Esophagus muscularis mucosa (tissue), 4 donors: ENCODE measurements at regions of chr17 and their contacts with region 1.

Region 1: DNA sequence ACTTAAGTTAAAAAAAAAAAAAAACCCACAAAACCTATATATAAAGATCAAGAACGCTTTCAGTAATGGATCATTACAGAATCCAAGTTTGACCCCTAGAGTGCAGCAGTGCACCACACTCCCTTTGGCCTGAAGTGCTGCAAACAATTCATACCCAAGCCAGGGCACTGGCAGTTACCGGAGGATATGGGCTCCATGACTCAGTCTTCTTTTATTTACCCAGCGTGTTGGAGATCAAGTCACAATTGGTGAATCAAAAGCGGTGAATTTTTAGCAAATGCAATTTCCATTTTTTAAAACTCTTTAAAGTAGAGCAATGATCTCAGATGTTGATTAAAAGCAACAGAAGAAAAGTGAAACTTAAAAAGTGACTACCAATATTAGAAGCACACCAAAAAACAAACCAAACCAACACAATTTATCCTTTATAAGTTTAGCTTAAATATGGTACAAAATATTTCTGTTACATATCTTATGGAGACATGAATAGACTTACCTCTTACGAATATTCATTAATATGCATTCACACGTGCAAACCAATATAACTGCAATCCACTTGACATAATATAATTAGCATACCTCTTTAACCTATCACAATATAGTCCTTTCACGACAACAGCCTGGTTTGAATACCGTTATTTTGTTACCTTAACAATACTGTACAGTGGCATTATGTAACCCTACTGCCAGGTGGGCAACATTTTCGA is 46.3 kb downstream of the ZNF652 start:
- DNase-seq: no peak
- H3K4me3 ChIP-seq: no peak overlapping the region
- H3K27ac ChIP-seq: peak overlapping the region in 1 of 4 donors; percentile 30
- H3K4me1 ChIP-seq: peaks cover 5 to 35% (median 25%) of the 10 kb centered on the region in 4 donors
- H3K27me3 ChIP-seq: no peaks in the 10 kb centered on the region
- CTCF ChIP-seq: peak; percentile 79 to 84 (median 83)
- EP300 ChIP-seq: no peak
- POLR2A ChIP-seq: no peak

Region 2: DNA sequence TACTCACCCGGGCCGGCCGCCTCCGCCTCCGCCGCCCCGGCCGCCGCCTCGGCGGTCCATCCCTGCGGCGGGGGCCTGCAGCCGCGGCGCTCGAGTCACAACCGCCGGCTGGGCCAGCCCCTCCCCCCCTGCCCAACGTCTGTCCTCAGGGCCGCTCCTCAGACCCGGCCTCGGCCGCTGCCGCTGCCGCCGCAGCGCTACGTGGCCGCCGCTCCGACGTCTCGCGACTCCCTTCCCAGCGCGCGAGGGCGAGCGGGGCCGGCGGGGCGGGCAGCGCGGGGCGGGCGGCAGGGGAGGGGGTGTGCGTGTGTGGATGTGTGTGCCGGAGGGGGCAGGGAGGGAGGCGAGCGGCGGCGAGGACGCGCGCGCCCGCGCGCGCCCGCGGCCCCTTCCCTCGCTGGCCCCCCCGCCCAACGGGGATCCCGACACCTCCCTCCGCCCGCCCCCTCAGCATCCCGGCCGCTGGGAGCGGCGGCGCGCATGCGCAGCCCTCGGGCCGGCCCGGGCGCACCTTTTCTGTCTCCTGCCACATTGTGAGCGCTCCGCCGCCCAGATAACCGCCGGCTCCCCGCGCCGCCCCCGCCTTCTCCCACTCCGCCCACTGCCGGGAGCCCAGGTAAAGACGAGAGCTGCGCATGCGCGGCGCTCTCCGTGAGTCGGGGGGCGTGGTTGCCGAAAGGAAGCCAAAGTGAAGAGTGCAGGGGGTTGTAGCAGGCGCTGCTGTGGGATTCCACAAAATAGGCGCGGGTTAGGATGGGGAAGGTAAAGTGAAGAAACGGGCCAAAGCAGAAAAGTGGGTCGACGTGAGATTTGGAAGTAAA is 46.4 kb after region 1 on chr17 and contains the start of gene ZNF652:
- intact Hi-C with region 1: loop called (anchors 5 kb)
- DNase-seq: peak; percentile 95
- H3K4me3 ChIP-seq: peak within 1 kb of the TSS; percentile 86 to 100 (median 96)
- H3K27ac ChIP-seq: peak within 1 kb of the TSS; percentile 94 to 95 (median 95)
- H3K4me1 ChIP-seq: peaks cover 14 to 54% (median 48%) of the 10 kb centered on the region in 4 donors
- H3K27me3 ChIP-seq: no peaks in the 10 kb centered on the region
- CTCF ChIP-seq: no peak
- EP300 ChIP-seq: no peak
- POLR2A ChIP-seq: no peak
- total RNA-seq, gene ZNF652: 59.3 to 100.0 (median 83.0) TPM

Region 3: GRCh38 chr17:49390548-49391324 is 75.0 kb after region 1 on chr17:
- intact Hi-C with region 1: loop called (anchors 1 kb)
- DNase-seq: no peak
- H3K4me3 ChIP-seq: peak overlapping the region in 1 of 4 donors; percentile 22
- H3K27ac ChIP-seq: peak overlapping the region; percentile 48 to 66 (median 66)
- H3K4me1 ChIP-seq: peaks cover 9 to 44% (median 43%) of the 10 kb centered on the region in 4 donors
- H3K27me3 ChIP-seq: no peaks in the 10 kb centered on the region
- CTCF ChIP-seq: no peak
- EP300 ChIP-seq: no peak
- POLR2A ChIP-seq: no peak

Region 4: GRCh38 chr17:49515196-49515770 is 199.6 kb after region 1 on chr17:
- intact Hi-C with region 1: no loop called
- DNase-seq: no peak
- H3K4me3 ChIP-seq: peak overlapping the region in 2 of 4 donors; percentile 4 to 8
- H3K27ac ChIP-seq: peak overlapping the region; percentile 81 to 85 (median 84)
- H3K4me1 ChIP-seq: peaks cover 23 to 44% (median 32%) of the 10 kb centered on the region in 4 donors
- H3K27me3 ChIP-seq: no peaks in the 10 kb centered on the region
- CTCF ChIP-seq: peak; percentile 25 to 48 (median 32)
- EP300 ChIP-seq: no peak
- POLR2A ChIP-seq: no peak